ENCODE measurements at regions of chr9 and their contacts with region 1.

Region 1: GRCh38 chr9:447230-448025 is 232.8 kb downstream of the DOCK8 start:
- DNase-seq: peak; percentile 83
- ATAC-seq: peak; percentile 99
- H3K4me3 Mint-ChIP-seq: no peak overlapping the region
- H3K27ac Mint-ChIP-seq: peak overlapping the region; percentile 65
- H3K4me1 Mint-ChIP-seq: peaks cover 26% of the 10 kb centered on the region
- H3K27me3 Mint-ChIP-seq: no peaks in the 10 kb centered on the region

Region 2: GRCh38 chr9:437061-437460 is 10.4 kb before region 1 on chr9:
- CTCF ChIA-PET with region 1: no interaction called
- POLR2A ChIA-PET with region 1: no interaction called
- intact Hi-C with region 1: no loop called
- DNase-seq: no peak
- ATAC-seq: no peak
- H3K4me3 Mint-ChIP-seq: no peak overlapping the region
- H3K27ac Mint-ChIP-seq: no peak overlapping the region
- H3K4me1 Mint-ChIP-seq: no peaks in the 10 kb centered on the region
- H3K27me3 Mint-ChIP-seq: no peaks in the 10 kb centered on the region

Region 3: DNA sequence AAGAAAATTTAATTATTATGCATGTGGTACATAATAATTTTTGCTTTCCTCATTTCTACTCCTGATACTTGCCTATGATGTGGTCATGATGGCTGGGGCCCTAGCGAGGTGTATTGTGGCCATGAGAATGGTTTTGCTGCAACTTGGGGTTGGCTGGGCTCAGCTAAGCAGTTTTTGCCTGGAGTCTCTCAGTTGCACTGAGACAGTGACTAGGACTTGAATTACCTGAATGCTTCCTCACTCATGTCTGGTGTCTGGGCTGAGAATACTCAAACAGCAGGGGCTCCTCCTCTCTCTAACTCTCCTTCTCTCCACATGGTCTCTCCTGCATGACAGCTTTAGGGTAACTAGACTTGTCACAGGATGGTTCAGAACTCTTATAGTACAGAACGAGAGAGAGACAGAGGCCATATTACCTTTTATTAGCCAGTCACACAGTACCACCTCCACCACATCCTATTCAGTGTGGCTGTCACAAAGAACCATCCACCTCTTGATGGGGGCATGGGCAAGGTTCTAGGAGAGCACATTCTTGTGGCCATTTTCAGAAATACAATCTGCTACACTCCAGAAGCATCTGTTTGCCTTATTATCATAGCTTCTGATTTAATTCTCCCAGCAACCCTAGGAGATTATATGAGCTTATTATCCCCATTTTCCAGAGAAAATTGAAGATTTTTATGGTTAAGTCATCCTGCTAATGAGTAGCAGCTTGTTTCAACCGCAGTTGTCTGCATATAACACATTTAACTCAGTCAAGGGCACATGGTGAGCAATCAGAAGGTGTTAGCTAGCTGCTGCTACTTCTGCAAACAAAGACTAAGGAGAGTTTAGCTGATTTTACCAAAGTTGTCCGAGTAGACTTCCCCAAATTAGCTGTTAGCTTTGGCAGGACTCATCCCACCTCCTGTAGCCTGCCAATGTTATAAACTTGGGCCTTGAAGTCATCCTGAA is 12.3 kb after region 1 on chr9:
- CTCF ChIA-PET with region 1: interaction called, 10 read pairs
- POLR2A ChIA-PET with region 1: interaction called, 3 read pairs
- intact Hi-C with region 1: no loop called
- DNase-seq: no peak
- ATAC-seq: no peak
- H3K4me3 Mint-ChIP-seq: no peak overlapping the region
- H3K27ac Mint-ChIP-seq: peak overlapping the region; percentile 28
- H3K4me1 Mint-ChIP-seq: peaks cover 5% of the 10 kb centered on the region
- H3K27me3 Mint-ChIP-seq: no peaks in the 10 kb centered on the region

Region 4: GRCh38 chr9:469672-470551 is 22.5 kb after region 1 on chr9:
- CTCF ChIA-PET with region 1: interaction called, 4 read pairs
- POLR2A ChIA-PET with region 1: no interaction called
- intact Hi-C with region 1: loop called in 1 of 2 experiments (anchors 1 kb)
- DNase-seq: peak; percentile 95
- ATAC-seq: peak; percentile 97
- H3K4me3 Mint-ChIP-seq: peak overlapping the region; percentile 91
- H3K27ac Mint-ChIP-seq: peak overlapping the region; percentile 94
- H3K4me1 Mint-ChIP-seq: peaks cover 20% of the 10 kb centered on the region
- H3K27me3 Mint-ChIP-seq: no peaks in the 10 kb centered on the region

Region 5: GRCh38 chr9:503881-504852 is 56.7 kb after region 1 on chr9:
- CTCF ChIA-PET with region 1: interaction called, 4 read pairs
- POLR2A ChIA-PET with region 1: no interaction called
- intact Hi-C with region 1: loop called in 1 of 2 experiments (anchors 2 kb)
- DNase-seq: peak; percentile 81
- ATAC-seq: peak; percentile 92
- H3K4me3 Mint-ChIP-seq: peak within 1 kb of the TSS; percentile 74
- H3K27ac Mint-ChIP-seq: peak within 1 kb of the TSS; percentile 63
- H3K4me1 Mint-ChIP-seq: peaks cover 8% of the 10 kb centered on the region
- H3K27me3 Mint-ChIP-seq: peaks cover 26% of the 10 kb centered on the region

Region 6: DNA sequence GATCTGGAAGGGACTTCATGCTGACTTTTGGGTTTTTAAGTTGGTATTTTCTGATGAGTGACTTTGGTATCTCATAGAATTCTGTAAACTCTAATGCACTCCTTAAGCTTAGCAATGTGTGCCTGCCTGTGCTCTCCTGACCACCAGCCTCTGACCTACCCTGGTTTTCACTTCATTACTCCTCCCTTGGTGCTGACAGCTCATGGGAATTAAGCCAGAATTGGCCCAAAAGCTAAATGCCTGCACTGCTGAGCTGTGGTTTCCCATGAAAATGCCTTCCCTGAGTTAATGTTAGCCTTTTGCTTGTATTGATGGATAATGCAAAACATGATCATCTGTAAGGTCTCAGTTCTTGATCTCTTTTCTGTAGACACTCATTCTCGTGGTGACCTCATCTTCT is 75.2 kb after region 1 on chr9:
- CTCF ChIA-PET with region 1: no interaction called
- POLR2A ChIA-PET with region 1: no interaction called
- intact Hi-C with region 1: no loop called
- DNase-seq: no peak
- ATAC-seq: no peak
- H3K4me3 Mint-ChIP-seq: no peak overlapping the region
- H3K27ac Mint-ChIP-seq: no peak overlapping the region
- H3K4me1 Mint-ChIP-seq: peaks cover 8% of the 10 kb centered on the region
- H3K27me3 Mint-ChIP-seq: no peaks in the 10 kb centered on the region